Activated CD4-positive, alpha-beta T cell treated with anti-CD3 and anti-CD28 coated beads, Interleukin-2, amount 10 ng/mL, durations not matched to agents 7 days and 5 days (primary cell): ENCODE measurements at regions of chr3 and their contacts with region 1.

Region 1: GRCh38 chr3:1969281-1969680 is 129.4 kb upstream of the CNTN4 start:
- DNase-seq: no peak
- H3K4me3 Mint-ChIP-seq: no peak overlapping the region
- H3K27ac Mint-ChIP-seq: no peak overlapping the region
- H3K4me1 Mint-ChIP-seq: no peaks in the 10 kb centered on the region
- H3K27me3 Mint-ChIP-seq: no peaks in the 10 kb centered on the region

Region 2: DNA sequence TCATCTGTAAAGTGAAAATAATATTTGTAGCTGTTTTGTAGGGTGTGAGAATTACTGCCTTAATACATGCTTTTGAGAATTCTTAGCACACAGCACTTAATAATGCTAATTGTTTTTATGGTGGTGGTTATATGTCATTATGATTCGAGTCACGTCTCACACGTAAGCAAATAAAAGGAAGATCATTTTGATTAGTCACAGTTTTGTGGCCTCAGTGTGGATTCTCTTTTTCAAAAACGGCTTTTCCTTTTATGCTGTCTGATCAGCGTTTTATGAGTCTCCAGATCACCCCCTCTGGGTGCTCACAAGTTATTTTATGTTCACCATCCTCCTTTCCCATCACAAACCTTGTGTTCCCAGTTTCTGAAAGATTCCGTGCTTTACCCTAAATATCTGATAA is 126.2 kb before region 1 on chr3:
- CTCF ChIA-PET with region 1: no interaction called
- POLR2A ChIA-PET with region 1: no interaction called
- DNase-seq: no peak
- H3K4me3 Mint-ChIP-seq: no peak overlapping the region
- H3K27ac Mint-ChIP-seq: no peak overlapping the region
- H3K4me1 Mint-ChIP-seq: no peaks in the 10 kb centered on the region
- H3K27me3 Mint-ChIP-seq: no peaks in the 10 kb centered on the region

Region 3: DNA sequence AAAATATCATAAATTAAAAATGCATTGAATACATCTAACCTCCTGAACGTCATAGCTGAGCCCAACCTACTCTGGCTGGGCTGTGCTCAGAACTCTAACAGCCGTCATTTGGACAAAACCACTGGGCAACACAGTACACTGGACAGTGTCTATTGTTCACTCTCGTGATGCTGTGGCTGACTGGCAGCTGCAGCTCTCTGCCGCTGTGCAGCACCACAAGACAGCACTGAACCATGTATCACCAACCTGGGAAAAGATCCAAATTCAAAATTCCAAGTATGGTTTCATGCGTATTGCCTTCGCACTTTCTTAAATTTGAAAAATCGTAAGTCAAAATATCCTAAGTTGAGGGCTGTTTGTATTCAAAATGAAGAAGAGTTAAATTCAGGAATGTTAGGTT is 15.7 kb before region 1 on chr3:
- CTCF ChIA-PET with region 1: no interaction called
- POLR2A ChIA-PET with region 1: no interaction called
- DNase-seq: no peak
- H3K4me3 Mint-ChIP-seq: no peak overlapping the region
- H3K27ac Mint-ChIP-seq: no peak overlapping the region
- H3K4me1 Mint-ChIP-seq: no peaks in the 10 kb centered on the region
- H3K27me3 Mint-ChIP-seq: no peaks in the 10 kb centered on the region

Region 4: DNA sequence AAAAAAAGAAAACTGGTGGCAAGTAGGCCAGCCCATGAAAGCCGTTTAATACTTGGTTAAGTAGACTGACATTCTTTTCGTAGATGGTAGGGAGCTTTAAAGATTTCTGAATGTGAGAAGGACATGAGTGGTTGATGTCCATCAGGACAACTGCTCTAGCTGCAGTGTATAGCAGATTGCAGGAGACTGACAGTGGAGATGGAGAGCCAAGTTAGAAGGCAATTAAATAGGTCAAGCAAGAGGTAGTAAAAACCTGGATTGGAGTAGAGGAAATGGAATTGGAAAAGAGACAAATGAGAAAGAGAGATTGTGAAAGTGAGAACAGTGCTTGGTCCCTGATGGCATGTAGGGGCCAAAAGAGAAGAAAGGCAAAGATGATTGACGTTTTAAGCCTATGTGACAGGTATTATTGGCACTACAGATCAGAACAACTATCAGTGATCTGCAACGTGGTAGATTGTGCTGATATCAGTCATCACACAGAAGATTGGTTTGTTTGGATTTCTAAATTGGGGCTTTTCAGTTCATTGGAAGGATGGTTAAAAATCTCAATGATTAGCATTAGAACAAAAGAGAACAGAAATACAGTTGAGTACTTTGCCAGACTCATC is 203.4 kb after region 1 on chr3:
- CTCF ChIA-PET with region 1: no interaction called
- POLR2A ChIA-PET with region 1: interaction called, 10 read pairs
- DNase-seq: no peak
- H3K4me3 Mint-ChIP-seq: no peak overlapping the region
- H3K27ac Mint-ChIP-seq: no peak overlapping the region
- H3K4me1 Mint-ChIP-seq: no peaks in the 10 kb centered on the region
- H3K27me3 Mint-ChIP-seq: no peaks in the 10 kb centered on the region

Region 5: DNA sequence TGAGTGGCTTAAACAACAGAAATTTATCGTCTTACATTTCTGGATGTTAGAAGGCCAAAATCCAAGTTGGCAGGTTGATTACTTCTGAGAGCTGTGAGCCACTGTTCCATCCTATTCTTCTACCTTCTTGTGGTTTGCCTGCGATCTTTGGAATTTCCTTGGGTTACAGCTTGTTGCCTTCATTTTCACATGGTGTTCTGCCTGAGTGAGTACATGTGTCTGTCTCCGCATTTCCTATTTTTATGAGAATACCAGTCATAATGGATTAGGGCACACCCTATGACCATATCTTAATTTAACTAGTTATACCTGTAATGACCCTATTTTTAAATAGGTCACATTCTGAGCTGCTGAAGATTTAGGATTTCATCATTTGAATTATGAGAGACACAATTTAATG is 423.7 kb after region 1 on chr3:
- CTCF ChIA-PET with region 1: no interaction called
- POLR2A ChIA-PET with region 1: no interaction called
- DNase-seq: no peak
- H3K4me3 Mint-ChIP-seq: no peak overlapping the region
- H3K27ac Mint-ChIP-seq: no peak overlapping the region
- H3K4me1 Mint-ChIP-seq: no peaks in the 10 kb centered on the region
- H3K27me3 Mint-ChIP-seq: no peaks in the 10 kb centered on the region